CD4-positive, alpha-beta T cell (primary cell): ENCODE measurements at regions of chr17 and their contacts with region 1.

Region 1: DNA sequence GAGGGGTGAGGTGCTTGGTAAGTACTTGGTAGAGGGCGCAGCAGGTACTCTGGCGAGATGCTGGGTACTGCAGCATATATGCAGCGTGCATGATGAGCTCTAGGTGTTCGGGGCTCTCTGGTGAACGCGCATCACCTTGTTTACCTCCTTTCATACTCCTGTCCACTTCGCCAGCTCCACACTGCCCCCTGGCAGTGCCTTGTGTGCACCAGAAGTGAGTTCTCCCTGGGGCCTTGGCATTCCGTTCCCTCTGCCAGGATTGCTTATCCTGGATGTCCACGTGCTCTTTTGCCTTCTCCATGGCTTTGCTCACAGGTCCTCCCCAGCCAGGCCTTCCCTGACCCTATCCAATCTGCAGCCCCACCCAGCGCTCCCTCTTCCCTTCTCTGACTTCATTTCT is 154.2 kb downstream of the MRM1 start:
- DNase-seq: peak in 13 of 14 experiments; percentile 9 to 60 (median 17)
- ATAC-seq: peak; percentile 29
- H3K4me3 ChIP-seq: no peak overlapping the region
- H3K4me3 Mint-ChIP-seq: no peak overlapping the region
- H3K27ac ChIP-seq: no peak overlapping the region
- H3K27ac Mint-ChIP-seq: no peak overlapping the region
- H3K4me1 ChIP-seq: peaks cover 3% of the 10 kb centered on the region
- H3K4me1 Mint-ChIP-seq: no peaks in the 10 kb centered on the region
- H3K27me3 ChIP-seq: no peaks in the 10 kb centered on the region
- H3K27me3 Mint-ChIP-seq: peaks cover 6% of the 10 kb centered on the region
- CTCF ChIP-seq: peak; percentile 53

Region 2: DNA sequence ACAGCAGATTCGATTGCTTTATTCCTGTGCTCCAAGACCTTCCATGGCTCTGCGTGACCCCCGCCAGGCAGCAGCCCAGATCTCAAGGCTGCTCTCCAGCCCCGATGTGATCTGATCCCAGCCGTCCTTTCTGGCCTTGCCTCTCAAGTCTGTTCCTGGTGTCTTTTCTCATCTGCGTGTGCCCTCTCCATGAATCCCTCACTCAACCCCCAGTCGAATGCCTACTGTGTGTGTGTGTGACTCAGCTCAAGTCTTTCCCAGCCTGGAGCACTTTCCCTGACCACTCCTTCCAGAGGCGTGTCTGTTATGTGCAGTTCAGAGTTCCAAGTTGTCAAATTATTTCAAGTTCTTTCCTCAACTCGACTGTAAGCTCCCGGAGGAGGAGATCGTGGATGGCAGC is 90.2 kb before region 1 on chr17:
- CTCF ChIA-PET with region 1: no interaction called
- POLR2A ChIA-PET with region 1: no interaction called
- intact Hi-C with region 1: no loop called
- DNase-seq: no peak
- ATAC-seq: no peak
- H3K4me3 ChIP-seq: no peak overlapping the region
- H3K4me3 Mint-ChIP-seq: no peak overlapping the region
- H3K27ac ChIP-seq: no peak overlapping the region
- H3K27ac Mint-ChIP-seq: no peak overlapping the region
- H3K4me1 ChIP-seq: no peaks in the 10 kb centered on the region
- H3K4me1 Mint-ChIP-seq: no peaks in the 10 kb centered on the region
- H3K27me3 ChIP-seq: peaks cover 0 to 7% of the 10 kb centered on the region in 2 experiments
- H3K27me3 Mint-ChIP-seq: peaks cover 16% of the 10 kb centered on the region
- CTCF ChIP-seq: no peak

Region 3: DNA sequence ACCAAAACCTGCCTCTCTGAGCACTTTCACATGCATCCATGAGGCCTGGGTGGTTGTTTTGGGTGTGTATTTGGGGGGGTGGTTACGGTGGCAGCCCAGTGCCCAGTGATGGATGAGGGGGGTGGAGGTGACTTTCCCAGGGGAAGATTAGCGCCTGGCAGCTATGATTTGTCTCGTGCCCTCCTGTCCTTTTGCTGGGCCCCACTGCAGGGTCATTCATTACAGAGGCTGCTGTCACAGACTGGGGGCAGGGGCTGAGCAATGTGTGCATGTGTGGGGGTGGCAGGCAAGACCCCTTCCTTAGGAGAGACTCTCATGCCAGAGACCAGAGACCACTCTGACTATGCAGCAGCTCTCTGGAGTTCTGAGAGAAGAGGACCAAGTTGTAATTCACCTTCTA is 60.5 kb before region 1 on chr17:
- CTCF ChIA-PET with region 1: no interaction called
- POLR2A ChIA-PET with region 1: no interaction called
- intact Hi-C with region 1: no loop called
- DNase-seq: no peak
- ATAC-seq: no peak
- H3K4me3 ChIP-seq: no peak overlapping the region
- H3K4me3 Mint-ChIP-seq: no peak overlapping the region
- H3K27ac ChIP-seq: no peak overlapping the region
- H3K27ac Mint-ChIP-seq: no peak overlapping the region
- H3K4me1 ChIP-seq: no peaks in the 10 kb centered on the region
- H3K4me1 Mint-ChIP-seq: no peaks in the 10 kb centered on the region
- H3K27me3 ChIP-seq: peaks cover 15 to 24% of the 10 kb centered on the region in 2 experiments
- H3K27me3 Mint-ChIP-seq: peaks cover 48% of the 10 kb centered on the region
- CTCF ChIP-seq: no peak

Region 4: DNA sequence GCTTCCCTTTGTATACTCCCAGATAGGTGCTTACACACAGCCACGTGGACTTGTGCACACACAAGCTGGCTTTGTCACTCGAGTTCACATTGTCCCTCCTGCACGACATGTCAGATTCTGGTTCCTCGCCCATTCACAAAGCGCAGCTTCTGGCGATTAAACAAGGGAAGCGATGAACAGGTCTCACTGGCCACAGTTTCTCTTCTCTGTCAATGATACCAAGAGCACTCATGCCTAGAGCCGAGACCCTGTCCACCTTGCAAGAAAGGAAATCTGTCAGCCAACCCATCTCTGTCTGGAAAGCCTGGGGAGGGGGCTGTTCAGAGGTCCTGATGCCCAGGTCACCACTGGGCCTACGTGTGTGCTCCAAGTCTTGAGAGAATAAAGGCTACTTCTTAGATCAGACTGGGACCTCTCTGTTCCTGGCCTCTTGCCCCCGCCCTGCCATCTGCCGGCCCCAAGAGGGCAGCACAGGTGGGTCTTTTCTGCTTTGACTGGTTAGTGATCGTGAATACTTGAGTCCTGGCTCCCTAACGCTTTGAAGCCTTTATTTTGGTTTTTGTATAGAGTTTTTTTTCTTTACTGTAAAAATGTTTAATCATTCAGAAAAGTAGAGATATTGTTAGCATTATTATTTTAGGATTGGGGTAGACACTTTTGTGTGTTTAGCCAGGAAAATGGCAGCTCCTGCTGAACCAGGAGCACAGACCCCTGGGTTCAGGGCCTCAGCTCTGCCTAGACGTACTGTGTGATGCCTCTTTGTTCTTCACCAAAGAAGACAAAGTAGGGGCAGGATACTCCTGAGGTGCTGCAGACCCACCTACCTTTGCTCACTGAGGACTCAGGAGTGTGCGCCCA is 49.5 kb before region 1 on chr17:
- CTCF ChIA-PET with region 1: no interaction called
- POLR2A ChIA-PET with region 1: no interaction called
- intact Hi-C with region 1: loop called in 1 of 2 experiments (anchors 1 kb)
- DNase-seq: peak in 12 of 14 experiments; percentile 25 to 68 (median 38)
- ATAC-seq: peak; percentile 74
- H3K4me3 ChIP-seq: no peak overlapping the region
- H3K4me3 Mint-ChIP-seq: no peak overlapping the region
- H3K27ac ChIP-seq: no peak overlapping the region
- H3K27ac Mint-ChIP-seq: no peak overlapping the region
- H3K4me1 ChIP-seq: peaks cover 6% of the 10 kb centered on the region
- H3K4me1 Mint-ChIP-seq: no peaks in the 10 kb centered on the region
- H3K27me3 ChIP-seq: peaks cover 31 to 36% of the 10 kb centered on the region in 2 experiments
- H3K27me3 Mint-ChIP-seq: peaks cover 45% of the 10 kb centered on the region
- CTCF ChIP-seq: peak; percentile 75

Region 5: GRCh38 chr17:36777118-36777517 is 21.5 kb after region 1 on chr17:
- CTCF ChIA-PET with region 1: no interaction called
- POLR2A ChIA-PET with region 1: no interaction called
- intact Hi-C with region 1: no loop called
- DNase-seq: no peak
- ATAC-seq: no peak
- H3K4me3 ChIP-seq: no peak overlapping the region
- H3K4me3 Mint-ChIP-seq: no peak overlapping the region
- H3K27ac ChIP-seq: no peak overlapping the region
- H3K27ac Mint-ChIP-seq: no peak overlapping the region
- H3K4me1 ChIP-seq: no peaks in the 10 kb centered on the region
- H3K4me1 Mint-ChIP-seq: no peaks in the 10 kb centered on the region
- H3K27me3 ChIP-seq: peaks cover 12 to 14% of the 10 kb centered on the region in 2 experiments
- H3K27me3 Mint-ChIP-seq: peaks cover 74% of the 10 kb centered on the region
- CTCF ChIP-seq: no peak

Region 6: GRCh38 chr17:36808181-36808661 is 52.6 kb after region 1 on chr17:
- CTCF ChIA-PET with region 1: no interaction called
- POLR2A ChIA-PET with region 1: no interaction called
- intact Hi-C with region 1: no loop called
- DNase-seq: no peak
- ATAC-seq: no peak
- H3K4me3 ChIP-seq: no peak overlapping the region
- H3K4me3 Mint-ChIP-seq: no peak overlapping the region
- H3K27ac ChIP-seq: no peak overlapping the region
- H3K27ac Mint-ChIP-seq: no peak overlapping the region
- H3K4me1 ChIP-seq: peaks cover 2% of the 10 kb centered on the region
- H3K4me1 Mint-ChIP-seq: no peaks in the 10 kb centered on the region
- H3K27me3 ChIP-seq: peaks cover 42 to 60% of the 10 kb centered on the region in 2 experiments
- H3K27me3 Mint-ChIP-seq: peaks cover 75% of the 10 kb centered on the region
- CTCF ChIP-seq: no peak